ENCODE measurements at regions of chr17 and their contacts with region 1.

Region 1: DNA sequence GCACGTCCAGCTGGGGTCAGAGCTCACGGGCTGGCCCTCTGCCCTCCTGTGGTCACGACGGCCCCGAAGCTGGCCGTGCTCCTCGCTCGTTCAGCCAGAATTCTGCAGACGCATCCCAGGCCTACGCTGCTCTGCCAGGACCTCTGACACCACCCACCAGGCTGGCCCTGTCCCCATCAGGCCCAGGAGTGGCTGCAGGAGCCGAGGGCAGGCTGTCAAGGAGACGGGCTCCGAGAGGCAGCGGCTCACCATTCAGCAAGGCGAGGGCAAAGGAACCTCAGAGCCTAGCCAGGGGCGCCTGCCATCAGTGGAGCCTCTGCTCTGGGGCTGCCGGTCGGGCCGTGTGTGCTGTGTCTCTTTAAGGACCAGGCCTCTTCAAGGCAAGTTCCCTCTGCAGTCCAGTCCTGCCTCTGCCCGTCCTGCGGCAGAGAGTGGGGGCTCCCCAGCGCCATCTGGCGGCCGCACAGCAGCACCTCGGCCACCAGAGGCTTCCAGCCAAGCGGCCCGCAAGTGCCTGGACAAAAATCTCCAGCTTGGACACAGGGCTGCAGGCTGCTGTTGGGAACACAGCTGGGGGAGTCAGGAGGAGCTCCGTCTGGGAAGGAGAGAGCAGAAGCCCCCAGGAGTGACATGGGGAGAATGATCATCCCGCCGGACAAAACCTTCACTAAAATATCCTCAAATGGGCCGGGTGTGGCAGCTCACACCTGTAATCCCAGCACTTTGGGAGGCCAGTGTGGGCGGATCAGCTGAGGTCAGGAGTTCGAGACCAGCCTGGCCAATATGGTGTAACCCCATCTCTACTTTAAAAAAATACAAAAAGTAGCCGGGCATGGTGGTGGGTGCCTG is 7.4 kb upstream of the ABR start:
- DNase-seq: peak; percentile 93
- H3K4me3 Mint-ChIP-seq: no peak overlapping the region
- H3K27ac Mint-ChIP-seq: no peak overlapping the region
- H3K4me1 Mint-ChIP-seq: peaks cover 5% of the 10 kb centered on the region
- H3K27me3 Mint-ChIP-seq: peaks cover 9% of the 10 kb centered on the region

Region 2: DNA sequence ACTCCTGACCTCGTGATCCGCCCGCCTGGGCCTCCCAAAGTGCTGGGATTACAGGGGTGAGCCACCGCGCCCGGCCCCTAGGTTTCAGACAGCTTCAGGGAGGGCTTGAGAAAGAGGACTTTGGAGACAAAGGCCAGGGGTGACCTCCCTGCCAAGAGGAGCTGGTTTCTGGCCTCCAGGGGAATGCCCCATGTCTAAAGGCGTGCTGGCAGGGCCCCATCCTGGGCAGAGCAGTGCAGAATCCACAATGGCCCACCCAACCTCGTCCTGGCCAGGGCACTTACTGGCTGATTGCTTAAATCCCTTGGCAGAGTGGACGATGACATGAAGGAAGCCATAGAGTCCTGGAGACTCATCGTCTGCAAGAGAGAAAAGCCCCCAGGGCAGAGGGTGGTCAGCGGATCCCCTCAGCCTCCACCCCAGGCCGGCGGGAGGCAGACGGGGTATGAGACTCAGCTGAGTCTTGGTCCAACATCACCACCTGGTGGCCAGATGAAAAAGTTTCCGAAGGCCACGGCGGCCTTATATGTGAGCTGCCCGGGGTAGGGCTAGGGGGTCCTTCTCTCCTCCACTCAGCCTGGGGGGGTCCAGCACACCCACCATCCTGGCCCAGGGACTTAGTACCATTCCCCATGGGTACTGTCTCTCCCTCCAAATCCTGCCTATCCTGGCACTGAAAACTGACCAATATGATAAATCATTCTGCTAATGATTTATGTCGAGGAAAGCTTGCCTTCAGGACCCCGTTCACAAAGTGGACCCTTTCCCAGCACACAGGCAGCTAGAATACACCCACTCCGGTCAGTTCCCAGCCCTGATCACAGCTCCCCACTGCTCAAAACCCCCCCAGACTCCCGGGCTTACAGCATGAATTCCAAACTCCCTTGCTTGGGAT is 131.1 kb before region 1 on chr17:
- intact Hi-C with region 1: loop called (anchors 10 kb)
- DNase-seq: peak; percentile 81
- H3K4me3 Mint-ChIP-seq: no peak overlapping the region
- H3K27ac Mint-ChIP-seq: no peak overlapping the region
- H3K4me1 Mint-ChIP-seq: no peaks in the 10 kb centered on the region
- H3K27me3 Mint-ChIP-seq: no peaks in the 10 kb centered on the region

Region 3: GRCh38 chr17:1122533-1123392 is 64.4 kb before region 1 on chr17:
- intact Hi-C with region 1: loop called (anchors 1 kb)
- DNase-seq: peak; percentile 96
- H3K4me3 Mint-ChIP-seq: no peak overlapping the region
- H3K27ac Mint-ChIP-seq: no peak overlapping the region
- H3K4me1 Mint-ChIP-seq: peaks cover 6% of the 10 kb centered on the region
- H3K27me3 Mint-ChIP-seq: no peaks in the 10 kb centered on the region

Measured in activated CD4-positive, alpha-beta T cell treated with anti-CD3 and anti-CD28 coated beads, Interleukin-2, amount 10 ng/mL, durations not matched to agents 24 days and 14 days (primary cell).